Mammary epithelial cell (primary cell): ENCODE measurements at regions of chr19 and their contacts with region 1.

Region 1: GRCh38 chr19:2636897-2637683 is 65.4 kb downstream of the GNG7 start:
- DNase-seq: no peak
- H3K4me3 ChIP-seq: no peak overlapping the region
- H3K27ac ChIP-seq: no peak overlapping the region
- H3K4me1 ChIP-seq: peaks cover 11% of the 10 kb centered on the region
- H3K27me3 ChIP-seq: no peaks in the 10 kb centered on the region
- CTCF ChIP-seq: peak; percentile 55 to 92

Region 2: GRCh38 chr19:1929021-1929742 is 707.9 kb before region 1 on chr19:
- CTCF ChIA-PET with region 1: interaction called, 14 read pairs
- dilution Hi-C with region 1: no loop called
- in situ Hi-C with region 1: no loop called
- intact Hi-C with region 1: no loop called
- DNase-seq: peak; percentile 58
- H3K4me3 ChIP-seq: peak overlapping the region; percentile 16 to 43 (median 35)
- H3K27ac ChIP-seq: no peak overlapping the region
- H3K4me1 ChIP-seq: peaks cover 6% of the 10 kb centered on the region
- H3K27me3 ChIP-seq: no peaks in the 10 kb centered on the region
- CTCF ChIP-seq: peak; percentile 76 to 84

Region 3: GRCh38 chr19:2427429-2428320 is 209.4 kb before region 1 on chr19 and contains the start of gene TIMM13:
- CTCF ChIA-PET with region 1: interaction called, 22 read pairs
- dilution Hi-C with region 1: no loop called
- in situ Hi-C with region 1: no loop called
- intact Hi-C with region 1: no loop called
- DNase-seq: peak; percentile 92
- H3K4me3 ChIP-seq: peak within 1 kb of the TSS; percentile 53 to 99 (median 77)
- H3K27ac ChIP-seq: peak within 1 kb of the TSS; percentile 74
- H3K4me1 ChIP-seq: peaks cover 23% of the 10 kb centered on the region
- H3K27me3 ChIP-seq: no peaks in the 10 kb centered on the region
- CTCF ChIP-seq: no peak
- total RNA-seq, gene TIMM13: 20.8 to 133 TPM

Region 4: DNA sequence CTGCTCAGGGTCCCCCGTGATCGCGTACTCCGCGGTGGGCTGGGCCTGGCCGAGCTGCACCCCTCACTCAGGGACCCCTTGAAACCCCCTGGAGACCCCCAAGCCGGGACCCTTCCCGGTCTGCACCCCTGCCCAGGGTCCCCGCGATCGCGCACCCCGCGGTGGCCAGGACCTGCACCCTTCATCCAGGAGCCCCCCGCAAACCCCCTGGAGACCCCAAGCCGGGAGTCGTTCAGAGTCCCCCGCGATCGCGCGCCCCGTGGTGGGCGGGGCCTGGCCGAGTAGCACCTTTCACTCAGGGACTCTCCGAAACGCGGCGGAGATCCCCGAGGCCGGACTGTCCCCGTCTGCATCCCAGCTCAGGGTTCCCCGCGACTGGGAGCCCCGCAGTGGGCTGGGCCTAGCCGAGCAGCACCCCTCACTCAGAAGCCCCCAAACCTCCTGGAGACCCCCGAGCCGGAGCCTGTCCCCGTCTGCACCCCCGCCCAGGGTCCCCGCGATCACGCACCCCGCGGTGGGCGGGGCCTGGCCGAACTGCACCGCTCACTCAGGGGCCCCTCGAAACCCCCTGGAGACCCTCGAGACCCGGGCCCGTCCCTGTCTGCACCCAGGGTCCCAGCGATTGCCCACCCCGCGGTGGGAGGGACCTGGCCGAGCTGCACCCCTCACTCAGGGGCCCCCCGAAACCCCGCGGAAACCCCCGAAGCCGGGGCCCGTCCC is 181.1 kb before region 1 on chr19:
- CTCF ChIA-PET with region 1: no interaction called
- dilution Hi-C with region 1: no loop called
- in situ Hi-C with region 1: no loop called
- intact Hi-C with region 1: no loop called
- DNase-seq: peak; percentile 27
- H3K4me3 ChIP-seq: peak overlapping the region; percentile 84 to 100 (median 98)
- H3K27ac ChIP-seq: peak overlapping the region; percentile 55
- H3K4me1 ChIP-seq: peaks cover 18% of the 10 kb centered on the region
- H3K27me3 ChIP-seq: no peaks in the 10 kb centered on the region
- CTCF ChIP-seq: no peak

Region 5: DNA sequence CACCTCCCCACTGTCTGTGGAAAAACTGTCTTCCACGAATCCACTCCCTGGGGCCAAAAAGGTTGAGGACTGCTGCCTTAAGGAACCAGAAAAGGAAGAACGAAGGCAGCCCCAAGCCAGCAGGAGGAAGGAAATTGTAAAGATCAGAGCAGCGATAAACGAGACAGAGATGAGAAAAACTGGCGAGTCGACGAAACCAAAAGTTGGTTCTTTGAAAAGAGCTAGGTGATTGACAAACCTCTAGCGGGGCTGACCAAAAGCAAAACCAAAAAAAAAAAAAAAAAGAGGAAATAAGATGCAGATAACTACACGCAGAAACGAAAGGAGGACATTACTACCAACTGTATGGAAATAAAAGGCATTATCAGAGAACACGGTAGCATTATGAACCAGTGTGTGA is 84.2 kb before region 1 on chr19:
- CTCF ChIA-PET with region 1: no interaction called
- dilution Hi-C with region 1: no loop called
- in situ Hi-C with region 1: no loop called
- intact Hi-C with region 1: no loop called
- DNase-seq: no peak
- H3K4me3 ChIP-seq: no peak overlapping the region
- H3K27ac ChIP-seq: no peak overlapping the region
- H3K4me1 ChIP-seq: peaks cover 4% of the 10 kb centered on the region
- H3K27me3 ChIP-seq: no peaks in the 10 kb centered on the region
- CTCF ChIP-seq: no peak

Region 6: DNA sequence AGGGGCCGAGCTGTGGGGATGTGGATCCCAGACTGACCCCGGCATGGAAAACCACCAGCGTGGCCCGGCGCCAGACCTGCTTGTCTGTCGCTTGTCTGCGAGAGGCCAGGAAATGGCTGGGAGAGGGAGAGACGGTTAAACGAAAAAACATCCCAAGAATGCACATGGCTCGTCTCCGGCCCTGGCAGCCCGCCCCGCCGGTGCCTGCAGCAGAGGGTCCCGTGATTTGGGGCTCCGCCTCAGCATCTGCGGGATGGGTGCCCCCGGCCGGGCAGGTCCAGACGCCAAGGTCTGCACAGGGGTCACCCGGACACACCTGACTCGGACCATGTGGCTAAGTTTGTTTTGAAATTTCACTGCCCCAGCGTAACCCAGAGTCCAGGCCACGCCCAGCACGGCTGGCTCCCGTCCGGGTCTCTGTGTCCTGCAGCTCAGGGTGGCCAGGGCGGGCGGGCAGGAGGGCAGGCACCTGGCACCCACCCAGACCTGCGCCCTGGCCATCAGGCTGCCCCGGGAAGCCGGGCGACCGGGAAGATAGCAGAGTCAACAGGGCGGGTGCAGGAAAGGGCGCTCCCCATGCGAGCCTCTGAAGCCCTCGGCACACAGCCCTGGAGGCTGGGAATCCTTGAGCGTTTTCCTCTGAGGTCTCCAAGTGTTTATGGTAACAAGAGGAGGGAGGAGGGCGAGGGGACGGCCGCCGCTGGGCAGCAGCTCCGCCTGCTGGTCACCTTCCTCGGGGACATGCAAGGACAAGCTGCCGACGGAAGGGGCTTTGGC is 58.0 kb before region 1 on chr19:
- CTCF ChIA-PET with region 1: no interaction called
- dilution Hi-C with region 1: no loop called
- in situ Hi-C with region 1: no loop called
- intact Hi-C with region 1: loop called (anchors 2 kb)
- DNase-seq: peak; percentile 69
- H3K4me3 ChIP-seq: peak overlapping the region; percentile 26 to 53 (median 50)
- H3K27ac ChIP-seq: no peak overlapping the region
- H3K4me1 ChIP-seq: peaks cover 20% of the 10 kb centered on the region
- H3K27me3 ChIP-seq: no peaks in the 10 kb centered on the region
- CTCF ChIP-seq: peak; percentile 62 to 87

Region 7: GRCh38 chr19:2691951-2692350 is 54.9 kb after region 1 on chr19:
- CTCF ChIA-PET with region 1: no interaction called
- dilution Hi-C with region 1: no loop called
- in situ Hi-C with region 1: no loop called
- intact Hi-C with region 1: no loop called
- DNase-seq: no peak
- H3K4me3 ChIP-seq: no peak overlapping the region
- H3K27ac ChIP-seq: no peak overlapping the region
- H3K4me1 ChIP-seq: no peaks in the 10 kb centered on the region
- H3K27me3 ChIP-seq: no peaks in the 10 kb centered on the region
- CTCF ChIP-seq: no peak

Region 8: DNA sequence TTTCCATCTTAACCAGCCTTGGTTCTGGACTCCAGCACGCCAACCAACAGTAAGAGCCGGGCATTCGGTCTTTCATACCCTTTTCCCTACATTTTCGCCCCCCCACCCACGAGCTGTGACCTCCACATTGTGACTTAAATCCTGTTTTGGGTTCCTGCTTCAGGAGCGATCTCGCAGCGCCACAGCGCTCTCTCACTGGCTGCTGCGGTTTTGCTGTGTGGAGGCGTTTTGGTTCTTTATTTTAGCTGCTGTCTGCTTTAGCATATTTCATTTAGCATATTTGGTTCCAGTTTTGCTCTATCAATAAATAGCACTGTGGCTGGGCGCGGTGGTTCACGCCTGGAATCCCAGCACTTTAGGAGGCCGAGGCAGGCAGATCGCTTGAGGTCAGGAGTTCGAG is 122.3 kb after region 1 on chr19:
- CTCF ChIA-PET with region 1: no interaction called
- dilution Hi-C with region 1: loop called (anchors 5 kb)
- in situ Hi-C with region 1: no loop called
- intact Hi-C with region 1: no loop called
- DNase-seq: no peak
- H3K4me3 ChIP-seq: no peak overlapping the region
- H3K27ac ChIP-seq: no peak overlapping the region
- H3K4me1 ChIP-seq: no peaks in the 10 kb centered on the region
- H3K27me3 ChIP-seq: no peaks in the 10 kb centered on the region
- CTCF ChIP-seq: no peak